Activated naive CD4-positive, alpha-beta T cell treated with anti-CD3 and anti-CD28 coated beads, Interleukin-2, amount 10 ng/mL, durations not matched to agents 7 days and 5 days (primary cell): ENCODE measurements at regions of chr1 and their contacts with region 1.

Region 1: DNA sequence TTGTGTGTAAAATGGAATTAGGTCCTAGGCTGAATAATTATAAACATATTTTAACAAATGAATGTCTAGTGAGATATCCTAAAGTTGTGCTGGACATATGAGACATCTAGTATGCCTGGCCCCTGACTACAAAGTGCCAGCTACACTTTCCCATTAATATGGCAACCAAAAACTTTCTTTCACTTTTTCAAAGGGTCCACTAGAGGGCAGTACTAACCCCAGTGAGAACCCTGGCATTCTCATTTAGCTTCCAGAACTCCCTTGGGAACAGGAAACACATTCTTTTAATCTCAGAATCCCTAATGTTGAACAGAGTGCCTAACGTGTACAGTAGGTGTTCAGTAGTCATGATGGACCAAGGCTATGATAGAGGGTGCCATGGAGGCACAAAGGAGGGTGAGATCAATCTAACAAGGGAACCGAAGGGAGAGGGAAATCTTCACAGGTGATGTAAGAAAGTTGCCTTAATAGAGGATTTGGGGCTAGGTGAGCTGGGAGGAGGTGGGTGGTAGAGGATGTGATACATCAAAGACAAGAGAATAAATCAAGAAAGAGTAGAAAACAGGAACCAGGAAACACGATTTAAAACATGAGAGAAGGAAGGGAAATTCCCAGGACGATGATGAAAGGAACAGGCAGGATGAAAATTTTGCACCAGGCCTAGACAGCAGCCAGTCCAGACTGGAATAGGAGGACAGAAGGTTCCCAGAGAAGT is 41.6 kb downstream of the NSL1 start:
- DNase-seq: no peak
- H3K4me3 Mint-ChIP-seq: no peak overlapping the region
- H3K27ac Mint-ChIP-seq: no peak overlapping the region
- H3K4me1 Mint-ChIP-seq: peaks cover 44% of the 10 kb centered on the region
- H3K27me3 Mint-ChIP-seq: no peaks in the 10 kb centered on the region

Region 2: GRCh38 chr1:212699104-212699624 is 50.8 kb before region 1 on chr1:
- CTCF ChIA-PET with region 1: interaction called, 14 read pairs
- DNase-seq: peak; percentile 66
- H3K4me3 Mint-ChIP-seq: peak overlapping the region; percentile 78
- H3K27ac Mint-ChIP-seq: no peak overlapping the region
- H3K4me1 Mint-ChIP-seq: peaks cover 32% of the 10 kb centered on the region
- H3K27me3 Mint-ChIP-seq: peaks cover 50% of the 10 kb centered on the region

Region 3: GRCh38 chr1:212721388-212722247 is 28.4 kb before region 1 on chr1:
- CTCF ChIA-PET with region 1: interaction called, 18 read pairs
- DNase-seq: peak; percentile 49
- H3K4me3 Mint-ChIP-seq: peak overlapping the region; percentile 16
- H3K27ac Mint-ChIP-seq: peak overlapping the region; percentile 64
- H3K4me1 Mint-ChIP-seq: peaks cover 31% of the 10 kb centered on the region
- H3K27me3 Mint-ChIP-seq: peaks cover 4% of the 10 kb centered on the region

Region 4: DNA sequence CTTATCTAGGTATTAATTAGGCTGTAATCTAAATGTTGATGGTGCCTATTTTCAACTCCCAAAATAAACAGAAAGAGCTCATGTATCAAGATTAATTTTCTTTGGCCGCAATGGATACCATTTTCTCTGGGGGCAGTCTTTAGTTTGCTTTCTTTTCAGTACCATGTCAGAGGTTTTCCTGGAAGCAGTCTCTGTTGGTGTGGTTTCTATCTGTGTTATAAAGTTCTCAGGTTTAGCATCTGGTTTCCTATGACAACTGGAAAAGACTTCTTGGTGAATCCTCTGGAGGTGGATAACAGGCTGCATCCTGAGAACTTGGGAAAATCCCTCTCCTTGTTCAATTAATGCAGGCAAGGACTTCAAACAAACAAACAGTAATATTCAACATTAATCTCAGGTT is 11.6 kb before region 1 on chr1:
- CTCF ChIA-PET with region 1: interaction called, 16 read pairs
- DNase-seq: no peak
- H3K4me3 Mint-ChIP-seq: no peak overlapping the region
- H3K27ac Mint-ChIP-seq: peak overlapping the region; percentile 77
- H3K4me1 Mint-ChIP-seq: peaks cover 24% of the 10 kb centered on the region
- H3K27me3 Mint-ChIP-seq: no peaks in the 10 kb centered on the region

Region 5: GRCh38 chr1:212760126-212760823 is 10.3 kb after region 1 on chr1:
- CTCF ChIA-PET with region 1: interaction called, 15 read pairs
- DNase-seq: peak; percentile 68
- H3K4me3 Mint-ChIP-seq: no peak overlapping the region
- H3K27ac Mint-ChIP-seq: no peak overlapping the region
- H3K4me1 Mint-ChIP-seq: peaks cover 10% of the 10 kb centered on the region
- H3K27me3 Mint-ChIP-seq: no peaks in the 10 kb centered on the region

Region 6: GRCh38 chr1:212782422-212783154 is 32.6 kb after region 1 on chr1:
- CTCF ChIA-PET with region 1: interaction called, 10 read pairs
- DNase-seq: no peak
- H3K4me3 Mint-ChIP-seq: no peak overlapping the region
- H3K27ac Mint-ChIP-seq: no peak overlapping the region
- H3K4me1 Mint-ChIP-seq: no peaks in the 10 kb centered on the region
- H3K27me3 Mint-ChIP-seq: no peaks in the 10 kb centered on the region